ENCODE measurements at regions of chr14 and their contacts with region 1.

Region 1: DNA sequence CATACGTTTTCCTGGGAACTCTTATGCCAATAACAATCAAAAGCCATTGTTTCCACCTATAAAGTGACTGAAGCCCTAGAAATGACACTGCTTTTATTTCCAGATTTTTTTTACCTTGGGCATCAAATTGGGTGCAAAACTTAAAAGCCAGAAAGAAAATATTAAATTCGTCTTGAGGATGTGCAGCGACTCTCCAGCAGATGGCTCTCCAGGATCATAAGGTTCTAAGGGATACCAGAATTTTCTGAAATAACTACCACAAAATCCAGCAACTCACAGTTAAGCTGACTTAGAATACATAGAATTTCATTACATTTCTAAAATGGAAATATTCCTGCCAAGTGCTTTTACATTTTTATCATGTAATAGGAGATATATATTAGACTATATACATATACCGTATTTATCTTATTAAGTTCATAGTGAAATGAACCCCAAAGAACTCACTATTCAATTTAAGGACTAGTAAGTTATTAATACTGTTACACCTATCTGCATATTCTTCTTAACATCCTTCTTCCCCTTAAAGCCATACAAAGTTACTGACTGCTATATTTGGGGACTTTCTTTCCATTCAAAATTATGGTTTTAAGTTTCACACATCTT is 44.0 kb downstream of the ARMH4 start:
- DNase-seq: no peak
- H3K4me3 ChIP-seq: no peak overlapping the region
- H3K27ac ChIP-seq: no peak overlapping the region
- H3K4me1 ChIP-seq: no peaks in the 10 kb centered on the region
- H3K27me3 ChIP-seq: no peaks in the 10 kb centered on the region
- CTCF ChIP-seq: peak; percentile 24 to 74 (median 54)
- EP300 ChIP-seq: no peak
- POLR2A ChIP-seq: no peak

Region 2: DNA sequence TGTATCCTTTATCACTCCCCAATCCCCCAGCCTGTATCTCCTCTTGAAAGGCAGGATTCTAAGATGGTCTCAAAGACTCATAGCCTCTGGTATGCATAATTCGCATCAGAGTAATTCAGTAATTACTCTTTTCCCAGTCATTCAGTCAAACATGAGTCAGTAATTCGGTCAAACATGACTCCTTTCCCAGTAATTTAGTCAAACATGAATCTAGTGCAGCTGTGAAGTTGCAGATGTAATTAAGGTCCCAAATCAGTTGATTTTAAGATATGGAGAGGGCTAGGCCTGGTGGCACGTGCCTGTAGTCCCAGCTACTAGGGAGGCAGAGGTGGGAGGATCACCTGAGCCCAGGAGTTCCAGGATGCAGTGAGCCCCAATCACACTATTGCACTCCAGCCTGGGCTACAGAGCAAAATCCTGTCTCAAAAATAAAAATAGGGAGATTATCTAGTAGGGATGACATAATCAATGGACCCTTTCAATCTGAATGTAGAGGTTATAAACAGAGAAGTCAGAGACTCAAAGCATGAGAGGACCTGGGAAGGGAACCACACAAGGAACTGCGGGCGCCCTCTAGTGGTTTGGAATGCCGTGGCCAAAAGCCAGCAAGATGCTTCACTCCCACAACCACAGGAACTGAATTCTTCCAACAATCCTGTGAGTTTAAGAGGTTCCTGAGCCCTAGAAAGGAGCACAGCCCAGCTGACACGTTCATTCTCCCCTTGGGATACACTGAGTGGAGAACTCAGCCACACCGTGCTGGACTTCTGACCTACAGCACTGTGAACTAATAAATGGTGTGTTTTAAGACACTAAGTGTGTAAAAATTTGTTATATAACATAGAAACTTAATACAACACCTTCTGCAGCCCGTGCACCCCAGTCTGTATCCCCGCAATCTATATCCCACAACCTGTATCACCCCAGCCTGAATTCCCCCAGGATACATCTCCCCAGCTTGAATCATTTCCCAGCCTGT is 58.2 kb after region 1 on chr14:
- intact Hi-C with region 1: loop called (anchors 1 kb)
- DNase-seq: peak; percentile 90
- H3K4me3 ChIP-seq: no peak overlapping the region
- H3K27ac ChIP-seq: no peak overlapping the region
- H3K4me1 ChIP-seq: peaks cover 0 to 4% (median 0%) of the 10 kb centered on the region in 4 donors
- H3K27me3 ChIP-seq: no peaks in the 10 kb centered on the region
- CTCF ChIP-seq: peak; percentile 22 to 82 (median 50)
- EP300 ChIP-seq: no peak
- POLR2A ChIP-seq: no peak

Region 3: GRCh38 chr14:58395812-58396788 is 288.1 kb after region 1 on chr14 and contains the start of gene TOMM20L:
- intact Hi-C with region 1: loop called (anchors 5 kb)
- DNase-seq: peak; percentile 77
- H3K4me3 ChIP-seq: peak within 1 kb of the TSS; percentile 26 to 66 (median 60)
- H3K27ac ChIP-seq: peak within 1 kb of the TSS; percentile 58 to 83 (median 76)
- H3K4me1 ChIP-seq: peaks cover 0 to 14% (median 5%) of the 10 kb centered on the region in 4 donors
- H3K27me3 ChIP-seq: no peaks in the 10 kb centered on the region
- CTCF ChIP-seq: peak in 2 of 4 experiments; percentile 43 to 94
- EP300 ChIP-seq: no peak
- POLR2A ChIP-seq: no peak
- total RNA-seq, gene TOMM20L: not detected